ENCODE measurements at regions of chrX and their contacts with region 1.

Region 1: DNA sequence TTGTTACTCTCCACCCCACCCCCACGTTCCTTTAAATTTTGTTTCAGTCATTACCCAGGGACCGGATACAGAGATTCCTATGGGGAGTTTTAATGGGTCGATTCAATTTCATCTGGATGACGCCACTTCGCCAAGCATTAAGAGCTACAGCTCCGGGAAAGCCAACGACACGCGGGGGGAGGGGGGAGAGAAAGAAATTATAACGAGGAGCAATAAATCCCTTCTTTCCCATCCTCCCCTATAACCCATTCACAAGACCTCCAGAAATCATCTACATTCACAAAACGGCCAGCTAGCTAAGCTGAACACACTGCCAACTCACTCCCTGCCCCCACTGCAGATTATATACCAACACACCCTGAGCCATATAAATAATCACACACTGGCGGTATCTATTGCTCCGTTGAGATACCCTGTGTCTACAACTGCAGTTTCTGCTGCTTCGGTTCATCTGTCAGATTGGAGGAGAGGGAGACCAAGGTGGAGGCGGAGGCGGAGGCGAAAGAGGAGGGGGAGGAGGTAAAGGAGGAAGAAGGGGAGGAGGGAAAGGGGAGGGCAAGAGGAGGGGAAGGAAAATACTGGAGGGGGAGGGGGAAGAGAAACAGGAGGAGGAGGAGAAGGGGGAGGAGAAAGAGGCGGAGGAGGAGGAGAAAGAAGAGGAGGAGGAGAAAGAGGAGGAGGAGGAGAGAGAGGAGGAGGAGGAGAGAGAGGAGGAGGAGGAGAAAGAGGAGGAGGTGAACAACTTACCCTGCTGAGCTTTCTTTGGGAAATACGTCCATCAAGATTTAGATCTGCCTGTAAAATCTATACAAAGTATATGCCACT is 113.9 kb upstream of the VAMP7 start:
- DNase-seq: peak; percentile 38 to 57
- ATAC-seq: peak; percentile 86 to 97
- H3K4me3 ChIP-seq: peak overlapping the region; percentile 43 to 64 (median 55)
- H3K27ac ChIP-seq: peak overlapping the region; percentile 72 to 86 (median 78)
- H3K4me1 ChIP-seq: peaks cover 0 to 3% of the 10 kb centered on the region in 2 donors
- H3K27me3 ChIP-seq: no peaks in the 10 kb centered on the region
- CTCF ChIP-seq: no peak
- POLR2A ChIP-seq: peak in 1 of 2 donors; percentile 24

Region 2: DNA sequence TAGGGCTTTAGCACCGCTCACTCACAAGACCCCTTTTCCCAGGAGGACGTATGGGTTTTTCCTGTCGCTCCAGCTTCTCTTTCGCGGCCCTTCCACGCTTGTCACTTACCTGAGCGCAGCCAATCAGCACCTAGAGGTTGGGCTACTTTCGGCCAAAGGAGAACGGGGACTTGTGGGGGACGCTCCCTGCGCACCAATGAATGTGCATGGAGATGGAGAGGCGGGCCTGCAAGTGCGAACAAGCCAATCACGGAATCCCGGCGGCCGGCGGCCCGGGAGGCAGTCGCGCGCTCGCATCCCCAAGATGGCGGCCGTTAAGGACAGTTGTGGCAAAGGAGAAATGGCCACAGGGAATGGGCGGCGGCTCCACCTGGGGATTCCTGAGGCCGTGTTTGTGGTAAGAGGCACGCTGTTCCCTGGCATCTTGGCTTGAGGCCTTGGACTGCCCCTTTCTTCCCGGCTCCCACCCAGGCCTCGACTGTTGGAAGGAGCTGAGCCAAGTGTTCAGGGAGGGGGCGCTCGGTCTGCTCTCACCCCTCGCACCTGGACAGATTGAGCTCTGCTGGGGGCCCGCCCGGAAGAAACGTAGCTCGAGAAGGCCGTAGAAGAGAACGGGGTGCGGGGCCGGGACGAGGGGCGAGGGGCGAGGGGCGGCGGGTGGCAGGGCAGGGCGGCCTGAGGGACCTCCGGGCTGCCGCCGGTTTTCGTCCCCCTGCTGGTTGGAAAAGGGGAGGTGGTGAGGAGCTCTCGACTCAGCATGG is 550.9 kb before region 1 on chrX and contains the start of gene VBP1:
- in situ Hi-C with region 1: no loop called
- intact Hi-C with region 1: loop called (anchors 2 kb)
- DNase-seq: peak; percentile 89 to 92
- ATAC-seq: peak; percentile 99 to 100
- H3K4me3 ChIP-seq: peak within 1 kb of the TSS; percentile 67 to 87 (median 78)
- H3K27ac ChIP-seq: peak within 1 kb of the TSS; percentile 91 to 97 (median 92)
- H3K4me1 ChIP-seq: peaks cover 7 to 8% of the 10 kb centered on the region in 2 donors
- H3K27me3 ChIP-seq: no peaks in the 10 kb centered on the region
- CTCF ChIP-seq: peak; percentile 12 to 54 (median 34)
- POLR2A ChIP-seq: peak; percentile 24 to 42
- total RNA-seq, gene VBP1: 53.6 to 79.9 (median 72.1) TPM

Region 3: GRCh38 chrX:155544881-155545280 is 222.4 kb before region 1 on chrX:
- in situ Hi-C with region 1: no loop called
- intact Hi-C with region 1: no loop called
- DNase-seq: no peak
- ATAC-seq: no peak
- H3K4me3 ChIP-seq: no peak overlapping the region
- H3K27ac ChIP-seq: no peak overlapping the region
- H3K4me1 ChIP-seq: no peaks in the 10 kb centered on the region
- H3K27me3 ChIP-seq: no peaks in the 10 kb centered on the region
- CTCF ChIP-seq: no peak
- POLR2A ChIP-seq: no peak

Region 4: DNA sequence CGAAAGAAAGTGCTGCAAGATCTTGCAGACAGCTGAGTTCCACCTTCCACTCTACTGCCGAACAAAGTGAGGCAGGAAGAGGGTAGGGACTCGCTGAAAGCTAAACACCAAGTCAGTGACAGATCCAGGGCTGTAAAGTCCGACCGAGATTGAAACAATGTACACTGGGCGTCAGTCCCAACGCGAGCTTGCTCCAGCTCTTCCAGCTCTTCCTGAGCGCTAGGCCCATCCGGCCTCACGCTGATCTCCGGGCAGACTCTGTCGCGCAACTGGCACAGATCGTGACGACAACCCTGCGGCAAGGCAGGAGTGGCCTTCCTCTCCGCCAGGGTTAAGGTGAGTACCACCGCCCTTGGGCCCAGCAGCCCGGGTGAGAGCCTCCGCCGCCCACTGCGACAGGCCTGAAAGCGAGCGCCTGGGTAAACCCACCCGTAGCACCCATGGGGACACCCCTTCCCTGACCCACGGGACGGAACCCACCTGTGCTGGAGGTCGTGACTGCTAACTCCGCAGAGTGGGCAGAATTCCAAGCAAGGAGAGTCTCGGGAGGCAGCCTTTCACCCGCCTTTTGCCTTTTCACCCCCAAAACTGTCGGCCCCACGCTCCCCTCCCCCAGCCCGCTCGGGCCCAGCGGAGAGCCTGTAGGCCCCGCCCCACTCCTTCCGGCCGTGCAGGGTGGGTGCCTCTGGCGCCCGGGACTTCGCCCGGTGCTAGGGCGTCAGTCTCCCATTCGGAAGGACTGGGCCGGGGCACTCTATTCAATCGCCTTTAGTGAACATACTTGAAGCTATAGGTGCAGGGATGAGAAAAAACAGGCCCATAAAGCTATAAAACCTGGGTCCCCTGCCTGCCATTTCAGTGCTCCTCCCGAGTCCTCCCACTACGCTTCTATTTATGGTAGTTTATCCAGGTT is 154.7 kb before region 1 on chrX and contains the start of gene TMLHE:
- in situ Hi-C with region 1: no loop called
- intact Hi-C with region 1: loop called (anchors 5 kb)
- DNase-seq: peak; percentile 11 to 40
- ATAC-seq: peak; percentile 88 to 91
- H3K4me3 ChIP-seq: peak within 1 kb of the TSS; percentile 72 to 83 (median 79)
- H3K27ac ChIP-seq: peak within 1 kb of the TSS; percentile 88 to 96 (median 91)
- H3K4me1 ChIP-seq: peaks cover 4 to 8% of the 10 kb centered on the region in 2 donors
- H3K27me3 ChIP-seq: no peaks in the 10 kb centered on the region
- CTCF ChIP-seq: no peak
- POLR2A ChIP-seq: no peak
- total RNA-seq, gene TMLHE: 13.7 to 25.7 (median 17.4) TPM

Region 5: GRCh38 chrX:155718972-155719586 is 48.2 kb before region 1 on chrX:
- in situ Hi-C with region 1: no loop called
- intact Hi-C with region 1: loop called (anchors 5 kb)
- DNase-seq: peak in 1 of 2 donors; percentile 53
- ATAC-seq: peak; percentile 95 to 97
- H3K4me3 ChIP-seq: peak overlapping the region; percentile 10 to 29 (median 25)
- H3K27ac ChIP-seq: peak overlapping the region; percentile 62 to 74 (median 64)
- H3K4me1 ChIP-seq: no peaks in the 10 kb centered on the region
- H3K27me3 ChIP-seq: no peaks in the 10 kb centered on the region
- CTCF ChIP-seq: no peak
- POLR2A ChIP-seq: no peak